Activated CD4-positive, alpha-beta T cell treated with anti-CD3 and anti-CD28 coated beads for 36 hours (primary cell): ENCODE measurements at regions of chr1 and their contacts with region 1.

Region 1: GRCh38 chr1:161071886-161072371 is 2.2 kb upstream of the ARHGAP30 start:
- DNase-seq: peak; percentile 75
- ATAC-seq: no peak
- H3K4me3 Mint-ChIP-seq: no peak overlapping the region
- H3K27ac Mint-ChIP-seq: peak overlapping the region; percentile 19
- H3K4me1 Mint-ChIP-seq: peaks cover 35% of the 10 kb centered on the region
- H3K27me3 Mint-ChIP-seq: no peaks in the 10 kb centered on the region

Region 2: GRCh38 chr1:160315359-160315758 is 756.6 kb before region 1 on chr1:
- CTCF ChIA-PET with region 1: no interaction called
- POLR2A ChIA-PET with region 1: no interaction called
- intact Hi-C with region 1: no loop called
- DNase-seq: no peak
- ATAC-seq: no peak
- H3K4me3 Mint-ChIP-seq: no peak overlapping the region
- H3K27ac Mint-ChIP-seq: peak overlapping the region; percentile 45
- H3K4me1 Mint-ChIP-seq: peaks cover 17% of the 10 kb centered on the region
- H3K27me3 Mint-ChIP-seq: no peaks in the 10 kb centered on the region

Region 3: GRCh38 chr1:161021165-161021960 is 50.6 kb before region 1 on chr1:
- CTCF ChIA-PET with region 1: interaction called, 5 read pairs
- POLR2A ChIA-PET with region 1: interaction called, 8 read pairs
- intact Hi-C with region 1: loop called in 1 of 2 experiments (anchors 1 kb)
- DNase-seq: peak; percentile 94
- ATAC-seq: peak; percentile 92
- H3K4me3 Mint-ChIP-seq: peak overlapping the region; percentile 87
- H3K27ac Mint-ChIP-seq: peak overlapping the region; percentile 86
- H3K4me1 Mint-ChIP-seq: peaks cover 33% of the 10 kb centered on the region
- H3K27me3 Mint-ChIP-seq: no peaks in the 10 kb centered on the region

Region 4: GRCh38 chr1:161045750-161046571 is 26.0 kb before region 1 on chr1 and contains the start of gene USF1:
- CTCF ChIA-PET with region 1: interaction called, 14 read pairs
- POLR2A ChIA-PET with region 1: interaction called, 11 read pairs
- intact Hi-C with region 1: loop called (anchors 1 kb)
- DNase-seq: peak; percentile 96
- ATAC-seq: peak; percentile 86
- H3K4me3 Mint-ChIP-seq: peak within 1 kb of the TSS; percentile 81
- H3K27ac Mint-ChIP-seq: peak within 1 kb of the TSS; percentile 99
- H3K4me1 Mint-ChIP-seq: peaks cover 32% of the 10 kb centered on the region
- H3K27me3 Mint-ChIP-seq: no peaks in the 10 kb centered on the region
- total RNA-seq, gene USF1: 34.5 to 42.8 TPM

Region 5: GRCh38 chr1:161092621-161093028 is 20.7 kb after region 1 on chr1:
- CTCF ChIA-PET with region 1: interaction called, 126 read pairs
- POLR2A ChIA-PET with region 1: interaction called, 4 read pairs
- intact Hi-C with region 1: loop called (anchors 1 kb)
- DNase-seq: peak; percentile 74
- ATAC-seq: peak; percentile 96
- H3K4me3 Mint-ChIP-seq: no peak overlapping the region
- H3K27ac Mint-ChIP-seq: peak overlapping the region; percentile 63
- H3K4me1 Mint-ChIP-seq: peaks cover 57% of the 10 kb centered on the region
- H3K27me3 Mint-ChIP-seq: no peaks in the 10 kb centered on the region

Region 6: DNA sequence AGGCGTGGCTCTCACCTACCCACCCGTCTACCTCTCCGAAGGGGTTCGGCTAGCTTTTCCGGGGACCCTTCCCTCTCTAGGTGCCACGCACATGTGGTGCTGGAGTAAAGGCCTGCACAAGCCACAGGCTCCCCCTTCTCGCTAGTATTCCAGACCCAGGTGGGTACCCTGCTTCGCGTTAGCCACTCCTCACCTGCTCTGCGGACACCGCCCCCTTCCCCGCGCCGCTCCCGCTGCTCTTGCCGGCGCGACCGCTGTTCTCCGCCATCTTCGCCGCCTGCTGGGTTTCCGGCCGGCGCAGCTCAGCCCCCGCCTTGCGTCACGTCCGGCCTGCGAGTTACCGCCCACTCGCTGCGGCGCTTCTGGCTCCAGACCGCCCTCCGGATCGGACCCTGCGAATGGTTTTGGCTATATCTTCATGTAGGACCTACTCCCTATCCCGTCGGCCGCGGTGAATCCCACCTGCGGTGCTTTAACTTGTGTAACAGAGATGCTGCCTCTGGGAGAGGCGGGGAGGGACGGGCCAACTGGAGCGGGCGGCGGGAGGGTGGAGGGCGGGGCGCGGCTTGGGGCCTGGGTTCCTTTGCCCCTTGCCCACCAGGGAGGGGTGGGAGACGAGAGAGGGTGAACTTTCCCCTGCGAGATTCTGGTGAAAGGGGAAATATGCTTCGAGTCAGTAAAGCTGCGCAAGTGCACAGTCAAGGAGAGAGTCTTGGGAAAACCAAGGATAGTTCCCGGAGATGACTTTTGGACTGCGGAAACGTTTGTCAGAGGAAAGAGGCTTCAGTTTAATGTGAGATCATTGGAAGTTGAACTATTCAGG is 46.0 kb after region 1 on chr1 and contains the starts of genes NIT1 and PFDN2:
- CTCF ChIA-PET with region 1: interaction called, 3 read pairs
- POLR2A ChIA-PET with region 1: no interaction called
- intact Hi-C with region 1: loop called (anchors 1 kb)
- DNase-seq: peak; percentile 94
- ATAC-seq: peak; percentile 53
- H3K4me3 Mint-ChIP-seq: peak within 1 kb of the TSS; percentile 94
- H3K27ac Mint-ChIP-seq: peak within 1 kb of the TSS; percentile 98
- H3K4me1 Mint-ChIP-seq: peaks cover 75% of the 10 kb centered on the region
- H3K27me3 Mint-ChIP-seq: no peaks in the 10 kb centered on the region
- total RNA-seq, gene NIT1: 58.2 to 62.1 TPM
- total RNA-seq, gene PFDN2: 108 to 136 TPM

Region 7: DNA sequence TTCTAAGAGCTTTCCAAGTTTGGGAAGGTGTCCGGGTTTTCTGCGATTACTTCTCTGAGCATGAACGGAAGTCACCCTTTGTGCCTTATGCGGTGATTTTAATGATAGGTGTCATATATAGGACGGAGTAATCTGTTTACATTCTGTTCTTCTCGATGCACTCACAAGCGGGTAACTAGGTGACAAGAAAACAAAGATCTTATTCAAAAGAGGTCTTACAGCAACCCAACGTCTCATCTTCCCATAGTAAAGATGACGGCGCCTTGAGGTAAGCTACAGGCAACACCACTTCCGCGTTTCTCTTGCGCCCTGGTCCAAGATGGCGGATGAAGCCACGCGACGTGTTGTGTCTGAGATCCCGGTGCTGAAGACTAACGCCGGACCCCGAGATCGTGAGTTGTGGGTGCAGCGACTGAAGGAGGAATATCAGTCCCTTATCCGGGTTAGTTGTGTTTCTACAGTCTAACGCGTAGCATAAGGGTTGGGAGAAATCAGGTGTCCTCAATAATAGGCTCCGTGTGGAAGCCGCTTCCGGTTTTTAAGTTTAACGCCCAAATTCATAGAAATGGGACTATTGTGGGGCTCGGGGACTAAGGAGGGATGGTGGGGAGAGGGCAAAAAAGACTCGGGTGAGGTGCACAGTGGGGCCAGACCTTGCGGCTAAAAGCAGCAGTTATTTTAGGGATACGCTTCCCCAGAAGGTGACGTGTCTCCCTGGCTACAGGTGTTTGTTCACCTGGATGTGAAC is 81.9 kb after region 1 on chr1 and contains the start of gene UFC1:
- CTCF ChIA-PET with region 1: interaction called, 6 read pairs
- POLR2A ChIA-PET with region 1: interaction called, 8 read pairs
- intact Hi-C with region 1: loop called (anchors 1 to 5 kb)
- DNase-seq: peak; percentile 89
- ATAC-seq: peak; percentile 98
- H3K4me3 Mint-ChIP-seq: peak within 1 kb of the TSS; percentile 94
- H3K27ac Mint-ChIP-seq: peak within 1 kb of the TSS; percentile 99
- H3K4me1 Mint-ChIP-seq: peaks cover 20% of the 10 kb centered on the region
- H3K27me3 Mint-ChIP-seq: no peaks in the 10 kb centered on the region
- total RNA-seq, gene UFC1: 89.2 to 98.6 TPM